Thyroid gland (tissue), 4 donors: ENCODE measurements at regions of chr2 and their contacts with region 1.

Region 1: DNA sequence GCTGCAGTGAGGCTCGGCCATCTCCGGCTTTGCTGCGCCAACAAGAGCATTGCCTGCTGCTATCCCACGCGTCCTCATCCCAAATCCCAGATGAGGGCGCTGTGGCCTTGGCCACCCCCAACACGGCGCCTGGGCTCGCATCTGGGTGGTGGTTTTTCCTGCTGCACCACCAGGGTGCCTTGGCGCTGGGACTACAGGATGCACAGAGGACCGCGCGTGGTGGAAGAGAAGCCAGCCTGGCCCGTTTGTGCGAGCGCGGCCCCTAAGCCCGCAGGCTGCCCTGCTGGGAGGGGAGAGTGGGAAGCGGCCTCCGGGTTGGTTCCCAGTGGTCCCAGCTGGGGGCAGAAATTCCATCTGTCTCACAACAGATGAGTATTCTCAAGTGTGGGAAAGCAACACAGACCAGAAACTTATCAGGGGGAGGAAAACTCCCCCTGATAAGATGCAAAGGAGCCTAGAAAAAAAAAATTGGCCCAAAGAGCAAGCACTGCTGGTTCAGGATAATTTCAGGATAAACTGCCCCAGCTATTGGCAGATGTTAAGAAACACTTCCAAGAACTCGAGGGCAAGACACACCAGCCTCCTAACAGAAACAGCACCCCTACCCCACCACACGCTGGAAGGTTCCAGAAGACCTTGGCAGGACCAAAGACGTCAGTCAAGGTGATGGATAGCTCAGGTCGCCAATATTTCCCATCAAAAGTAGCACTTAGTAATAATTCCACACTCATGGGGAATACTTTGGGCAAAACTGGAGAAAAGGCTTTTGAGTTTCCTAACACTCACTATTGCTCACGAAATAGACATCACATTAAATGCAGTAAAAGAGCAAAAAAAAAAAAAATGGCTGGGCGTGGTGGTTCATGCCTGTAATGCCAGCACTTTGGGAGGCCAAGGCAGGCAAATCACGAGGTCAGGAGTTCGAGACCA is 152.1 kb downstream of the PXDN start:
- DNase-seq: peak; percentile 62 to 63
- H3K4me3 ChIP-seq: no peak overlapping the region
- H3K27ac ChIP-seq: no peak overlapping the region
- H3K4me1 ChIP-seq: peaks cover 0 to 19% of the 10 kb centered on the region in 2 donors
- H3K27me3 ChIP-seq: no peaks in the 10 kb centered on the region
- CTCF ChIP-seq: peak in 5 of 6 experiments; percentile 18 to 83 (median 58)
- POLR2A ChIP-seq: no peak

Region 2: GRCh38 chr2:1480671-1481076 is 111.6 kb before region 1 on chr2:
- intact Hi-C with region 1: no loop called
- DNase-seq: no peak
- H3K4me3 ChIP-seq: no peak overlapping the region
- H3K27ac ChIP-seq: no peak overlapping the region
- H3K4me1 ChIP-seq: no peaks in the 10 kb centered on the region
- H3K27me3 ChIP-seq: no peaks in the 10 kb centered on the region
- CTCF ChIP-seq: no peak
- POLR2A ChIP-seq: no peak

Region 3: DNA sequence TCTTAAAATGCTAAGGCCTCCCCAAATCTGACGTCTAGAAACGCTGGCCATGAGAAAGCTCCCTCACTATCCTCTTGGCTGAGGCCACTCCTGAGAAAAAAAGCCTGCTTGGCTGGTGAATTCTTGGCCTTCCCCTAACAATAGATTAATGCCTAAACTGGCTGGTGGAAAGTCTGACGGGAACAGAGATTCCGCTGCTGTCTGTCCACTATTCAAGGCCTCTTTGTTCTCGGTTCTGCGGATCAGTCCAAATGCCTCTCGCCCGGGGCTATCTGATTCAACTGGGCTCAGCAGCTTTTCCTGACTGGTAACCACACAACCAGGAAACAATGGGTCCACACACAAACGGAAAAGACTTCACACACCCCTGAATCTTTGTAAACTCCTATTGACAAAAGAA is 124.9 kb after region 1 on chr2:
- intact Hi-C with region 1: no loop called
- DNase-seq: no peak
- H3K4me3 ChIP-seq: no peak overlapping the region
- H3K27ac ChIP-seq: peak overlapping the region in 1 of 3 donors; percentile 6
- H3K4me1 ChIP-seq: peaks cover 0 to 32% of the 10 kb centered on the region in 2 donors
- H3K27me3 ChIP-seq: no peaks in the 10 kb centered on the region
- CTCF ChIP-seq: no peak
- POLR2A ChIP-seq: no peak

Region 4: GRCh38 chr2:1769703-1770422 is 177.6 kb after region 1 on chr2:
- intact Hi-C with region 1: loop called (anchors 5 kb)
- DNase-seq: peak; percentile 87 to 88
- H3K4me3 ChIP-seq: no peak overlapping the region
- H3K27ac ChIP-seq: no peak overlapping the region
- H3K4me1 ChIP-seq: peaks cover 0 to 4% of the 10 kb centered on the region in 2 donors
- H3K27me3 ChIP-seq: no peaks in the 10 kb centered on the region
- CTCF ChIP-seq: peak; percentile 61 to 85 (median 84)
- POLR2A ChIP-seq: no peak